A549 (cell line): ENCODE measurements at regions of chr5 and their contacts with region 1.

Region 1: GRCh38 chr5:133287500-133287899 is 235.7 kb downstream of the HSPA4 start:
- DNase-seq: peak; percentile 39 to 53
- ATAC-seq: peak; percentile 63 to 82; a peak in 5 of 6 replicates
- H3K4me3 ChIP-seq: no peak overlapping the region
- H3K27ac ChIP-seq: no peak overlapping the region
- H3K4me1 ChIP-seq: peaks cover 43% of the 10 kb centered on the region
- CTCF ChIP-seq: peak; percentile 58
- EP300 ChIP-seq: no peak
- POLR2A ChIP-seq: no peak
- RAD21 ChIP-seq: peak; percentile 71 to 75

Region 2: GRCh38 chr5:133298447-133298846 is 10.9 kb after region 1 on chr5:
- CTCF ChIA-PET with region 1: interaction called, 21 read pairs
- POLR2A ChIA-PET with region 1: no interaction called
- DNase-seq: no peak
- ATAC-seq: no peak
- H3K4me3 ChIP-seq: no peak overlapping the region
- H3K27ac ChIP-seq: no peak overlapping the region
- H3K4me1 ChIP-seq: no peaks in the 10 kb centered on the region
- CTCF ChIP-seq: no peak
- EP300 ChIP-seq: no peak
- POLR2A ChIP-seq: no peak
- RAD21 ChIP-seq: no peak

Region 3: GRCh38 chr5:133304707-133305216 is 17.3 kb after region 1 on chr5:
- CTCF ChIA-PET with region 1: interaction called, 21 read pairs
- POLR2A ChIA-PET with region 1: no interaction called
- DNase-seq: no peak
- ATAC-seq: no peak
- H3K4me3 ChIP-seq: no peak overlapping the region
- H3K27ac ChIP-seq: no peak overlapping the region
- H3K4me1 ChIP-seq: no peaks in the 10 kb centered on the region
- CTCF ChIP-seq: no peak
- EP300 ChIP-seq: no peak
- POLR2A ChIP-seq: no peak
- RAD21 ChIP-seq: no peak

Region 4: DNA sequence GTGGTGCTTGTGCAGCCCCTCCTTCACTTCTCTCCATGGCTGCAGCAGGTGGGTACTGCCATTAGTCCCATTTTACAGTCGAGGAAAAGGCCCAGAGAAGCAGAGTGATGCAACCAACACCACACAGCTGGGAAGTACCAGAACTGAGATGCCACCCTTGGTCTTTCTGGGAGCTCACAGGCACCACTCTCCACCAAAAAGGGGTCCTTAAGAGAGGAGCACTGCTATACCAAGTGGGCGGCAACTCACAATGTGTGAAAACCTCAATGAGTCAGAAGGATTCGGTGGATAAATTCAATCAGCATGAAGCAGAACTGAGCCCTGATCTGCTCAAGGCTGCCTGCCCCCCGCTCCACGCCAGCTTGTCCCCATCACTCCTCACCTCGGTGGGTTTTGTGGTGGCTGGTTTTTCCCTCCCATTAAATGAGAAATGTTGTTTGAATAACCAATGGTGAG is 111.2 kb after region 1 on chr5:
- CTCF ChIA-PET with region 1: no interaction called
- POLR2A ChIA-PET with region 1: no interaction called
- DNase-seq: no peak
- ATAC-seq: no peak
- H3K4me3 ChIP-seq: no peak overlapping the region
- H3K27ac ChIP-seq: no peak overlapping the region
- H3K4me1 ChIP-seq: no peaks in the 10 kb centered on the region
- CTCF ChIP-seq: no peak
- EP300 ChIP-seq: no peak
- POLR2A ChIP-seq: no peak
- RAD21 ChIP-seq: no peak